HCT116 (cell line): ENCODE measurements at regions of chr3 and their contacts with region 1.

Region 1: DNA sequence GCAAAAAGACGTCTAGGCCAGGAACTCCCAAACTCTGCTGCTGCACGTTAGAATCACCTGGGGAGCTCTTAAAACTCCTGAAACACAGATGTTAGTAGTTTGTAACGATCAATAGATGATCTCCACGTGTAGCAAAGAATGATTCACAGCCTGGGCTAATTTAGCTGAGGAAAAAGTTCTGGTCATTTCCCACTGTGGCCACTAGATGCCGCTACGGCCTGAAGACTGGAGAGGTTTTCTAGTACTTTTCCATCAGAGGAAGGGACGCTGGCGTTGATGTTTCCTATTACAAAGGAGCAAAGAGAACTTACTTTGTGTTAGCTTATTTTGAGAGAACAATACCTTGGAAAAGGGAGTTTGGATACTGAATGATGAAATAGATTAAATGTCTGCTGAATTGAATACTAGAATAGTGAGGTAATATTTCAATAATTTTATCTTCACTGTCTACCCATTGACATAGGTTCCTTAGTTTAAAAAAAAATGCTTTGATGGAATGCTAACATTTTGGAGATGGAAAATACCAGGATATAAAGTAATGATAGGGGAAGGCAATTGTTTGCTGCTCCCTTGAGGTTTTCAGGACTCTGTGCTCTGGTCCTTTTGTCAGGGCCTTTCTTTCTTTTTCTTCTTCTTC is 159.1 kb downstream of the P3H2 start:
- DNase-seq: peak; percentile 75
- ATAC-seq: peak; percentile 66
- H3K4me3 ChIP-seq: no peak overlapping the region
- H3K27ac ChIP-seq: no peak overlapping the region
- H3K4me1 ChIP-seq: peaks cover 3 to 7% of the 10 kb centered on the region in 2 experiments; a peak in 2 of 4 replicates
- H3K27me3 ChIP-seq: no peaks in the 10 kb centered on the region
- CTCF ChIP-seq: peak; percentile 80 to 89 (median 86); a peak in 5 of 6 replicates
- POLR2A ChIP-seq: no peak
- RAD21 ChIP-seq: peak; percentile 91

Region 2: DNA sequence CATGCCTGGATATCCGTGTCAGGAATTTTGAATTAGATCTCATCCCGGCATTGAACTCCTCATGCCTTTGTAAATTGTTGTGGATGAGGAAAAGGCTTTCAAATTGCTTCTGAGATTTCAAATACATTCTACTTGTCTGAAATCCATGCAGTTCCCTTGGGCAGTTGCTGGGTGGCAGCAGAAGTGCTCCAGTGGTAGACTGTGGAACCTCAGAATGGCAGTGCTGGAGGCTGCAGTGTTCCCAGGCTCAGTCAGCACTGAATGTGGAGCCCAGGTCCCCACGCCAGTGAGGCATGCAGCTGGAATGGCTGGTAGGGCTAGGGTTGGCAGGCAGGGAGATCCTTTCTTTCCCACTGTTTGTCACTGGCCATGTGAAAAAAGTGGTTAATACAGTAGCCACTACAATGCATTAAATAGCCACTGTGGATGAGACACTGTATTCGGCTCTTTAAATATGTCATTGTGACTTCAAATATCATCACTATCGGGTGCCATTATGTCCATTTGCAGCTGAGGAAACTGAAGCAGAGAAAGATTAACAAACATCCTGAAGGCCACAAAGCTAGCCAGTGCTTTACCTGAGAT is 691.3 kb before region 1 on chr3:
- CTCF ChIA-PET with region 1: interaction called, 11 read pairs
- POLR2A ChIA-PET with region 1: no interaction called
- RAD21 ChIA-PET with region 1: no interaction called
- intact Hi-C with region 1: no loop called
- DNase-seq: peak; percentile 73
- ATAC-seq: peak; percentile 90
- H3K4me3 ChIP-seq: no peak overlapping the region
- H3K27ac ChIP-seq: no peak overlapping the region
- H3K4me1 ChIP-seq: peaks cover 0 to 9% of the 10 kb centered on the region in 2 experiments; a peak in 3 of 4 replicates
- H3K27me3 ChIP-seq: no peaks in the 10 kb centered on the region; the same call in 1 of the 2 replicates
- CTCF ChIP-seq: peak; percentile 82 to 84 (median 83)
- POLR2A ChIP-seq: no peak
- RAD21 ChIP-seq: peak; percentile 96

Region 3: DNA sequence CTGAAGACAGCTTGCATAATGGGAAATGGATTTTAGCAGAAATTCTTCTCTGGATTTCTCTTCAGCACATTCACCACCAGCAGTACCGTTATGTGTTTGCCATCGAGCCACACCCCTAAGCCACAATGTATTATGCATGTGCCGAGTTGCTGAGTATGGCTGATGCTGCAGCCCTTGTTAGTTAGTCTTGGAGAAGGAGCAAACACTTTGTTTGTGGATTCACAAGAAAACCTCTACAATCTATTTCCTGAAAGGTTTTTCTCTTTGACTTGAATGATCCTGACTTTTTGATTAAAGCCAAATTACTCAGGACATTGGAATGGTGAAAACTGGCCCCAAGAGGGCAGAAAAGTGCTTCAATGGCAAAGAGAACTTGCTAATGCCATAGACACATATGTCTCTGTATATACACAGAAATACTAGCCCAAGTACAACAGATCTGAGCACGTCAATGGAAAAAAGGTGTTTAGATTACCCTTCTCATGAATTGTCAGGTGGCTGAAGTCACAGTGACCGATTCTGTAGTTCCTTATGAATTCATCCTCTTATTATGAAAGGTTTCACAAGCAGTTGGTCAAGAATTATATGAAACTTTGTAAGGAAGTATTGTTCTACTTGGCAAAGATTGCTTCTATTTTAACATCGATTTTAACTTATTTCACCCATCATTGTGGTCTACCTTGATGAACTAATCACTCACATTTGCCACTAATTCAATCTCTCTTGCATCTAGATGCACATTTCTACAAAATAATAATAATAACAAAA is 56.1 kb after region 1 on chr3:
- CTCF ChIA-PET with region 1: interaction called, 6 read pairs
- POLR2A ChIA-PET with region 1: no interaction called
- RAD21 ChIA-PET with region 1: interaction called in 1 of 2 experiments, 4 read pairs
- intact Hi-C with region 1: loop called (anchors 2 kb)
- DNase-seq: peak; percentile 31
- ATAC-seq: peak; percentile 71
- H3K4me3 ChIP-seq: no peak overlapping the region
- H3K27ac ChIP-seq: no peak overlapping the region
- H3K4me1 ChIP-seq: peaks cover 6 to 21% of the 10 kb centered on the region in 2 experiments
- H3K27me3 ChIP-seq: no peaks in the 10 kb centered on the region; the same call in 1 of the 2 replicates
- CTCF ChIP-seq: peak; percentile 25 to 68 (median 51); a peak in 4 of 6 replicates
- POLR2A ChIP-seq: no peak
- RAD21 ChIP-seq: peak; percentile 83

Region 4: GRCh38 chr3:190321789-190322603 is 360.4 kb after region 1 on chr3 and contains the start of gene CLDN1:
- CTCF ChIA-PET with region 1: interaction called, 21 read pairs
- POLR2A ChIA-PET with region 1: no interaction called
- RAD21 ChIA-PET with region 1: no interaction called
- intact Hi-C with region 1: loop called (anchors 1 kb)
- DNase-seq: peak; percentile 24
- ATAC-seq: peak; percentile 97
- H3K4me3 ChIP-seq: peak within 1 kb of the TSS; percentile 25 to 34
- H3K27ac ChIP-seq: no peak within 1 kb of the TSS
- H3K4me1 ChIP-seq: peaks cover 0 to 10% of the 10 kb centered on the region in 2 experiments; a peak in 1 of 4 replicates
- H3K27me3 ChIP-seq: no peaks in the 10 kb centered on the region; the same call in 1 of the 2 replicates
- CTCF ChIP-seq: peak; percentile 79 to 92 (median 84)
- POLR2A ChIP-seq: no peak
- RAD21 ChIP-seq: peak; percentile 85
- total RNA-seq, gene CLDN1: 0.20 TPM

Region 5: DNA sequence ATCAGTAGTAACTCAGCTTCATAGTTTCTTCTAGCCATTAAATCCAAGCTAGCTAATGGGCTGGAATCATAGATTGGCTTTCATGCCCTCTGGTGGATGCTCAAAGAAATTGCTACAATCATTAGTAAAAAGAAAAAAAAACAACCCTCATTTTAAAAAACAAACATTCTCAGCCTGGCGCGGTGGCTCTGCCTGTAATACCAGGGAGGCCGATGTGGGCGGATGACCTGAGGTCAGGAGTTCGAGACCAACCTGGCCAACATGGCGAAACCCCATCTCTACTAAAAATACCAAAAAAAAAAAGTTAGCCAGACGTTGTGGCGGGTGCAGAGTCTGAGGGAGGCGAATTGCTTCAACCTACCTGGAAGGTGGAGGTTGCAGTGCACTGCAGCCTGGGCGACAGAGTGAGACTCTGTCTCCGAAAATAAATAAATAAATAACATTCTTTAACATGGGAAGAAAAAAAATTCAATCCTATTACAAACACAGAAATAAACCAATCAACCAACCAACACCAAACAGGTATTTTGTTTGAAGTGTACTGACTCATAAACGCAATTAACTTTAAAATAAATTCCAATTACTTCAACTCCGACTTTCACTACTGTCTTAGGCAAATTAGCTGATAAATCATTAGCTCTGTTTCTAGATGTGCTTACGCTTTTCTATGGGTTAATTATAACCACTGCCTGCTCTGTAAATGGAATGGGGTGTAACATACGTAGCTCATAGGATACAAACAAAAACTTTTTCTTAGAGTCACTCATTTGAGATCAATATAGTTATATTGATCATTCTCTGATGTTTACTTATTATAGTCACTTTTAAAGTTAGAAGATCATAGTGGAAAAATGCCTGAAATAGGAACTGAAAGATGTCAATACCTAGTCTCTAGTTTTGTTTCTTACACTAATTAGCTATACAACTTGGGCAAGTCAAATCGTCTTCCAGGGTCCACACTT is 463.1 kb after region 1 on chr3:
- CTCF ChIA-PET with region 1: interaction called, 19 read pairs
- POLR2A ChIA-PET with region 1: no interaction called
- RAD21 ChIA-PET with region 1: no interaction called
- intact Hi-C with region 1: loop called (anchors 1 kb)
- DNase-seq: peak; percentile 78
- ATAC-seq: peak; percentile 91
- H3K4me3 ChIP-seq: peak overlapping the region in 1 of 2 experiments; percentile 17; a peak in 2 of 4 replicates
- H3K27ac ChIP-seq: no peak overlapping the region
- H3K4me1 ChIP-seq: peaks cover 0 to 6% of the 10 kb centered on the region in 2 experiments; a peak in 1 of 4 replicates
- H3K27me3 ChIP-seq: no peaks in the 10 kb centered on the region
- CTCF ChIP-seq: peak; percentile 63 to 81 (median 69)
- POLR2A ChIP-seq: no peak
- RAD21 ChIP-seq: peak; percentile 74

Region 6: GRCh38 chr3:190701096-190701532 is 739.5 kb after region 1 on chr3:
- CTCF ChIA-PET with region 1: interaction called, 8 read pairs
- POLR2A ChIA-PET with region 1: interaction called, 4 read pairs
- RAD21 ChIA-PET with region 1: no interaction called
- intact Hi-C with region 1: loop called (anchors 1 kb)
- DNase-seq: peak; percentile 51
- ATAC-seq: peak; percentile 94
- H3K4me3 ChIP-seq: no peak overlapping the region
- H3K27ac ChIP-seq: no peak overlapping the region
- H3K4me1 ChIP-seq: peaks cover 0 to 3% of the 10 kb centered on the region in 2 experiments; a peak in 1 of 4 replicates
- H3K27me3 ChIP-seq: no peaks in the 10 kb centered on the region
- CTCF ChIP-seq: peak; percentile 62 to 77 (median 68); a peak in 5 of 6 replicates
- POLR2A ChIP-seq: no peak
- RAD21 ChIP-seq: peak; percentile 85